HCT116 (cell line): ENCODE measurements at regions of chr5 and their contacts with region 1.

Region 1: DNA sequence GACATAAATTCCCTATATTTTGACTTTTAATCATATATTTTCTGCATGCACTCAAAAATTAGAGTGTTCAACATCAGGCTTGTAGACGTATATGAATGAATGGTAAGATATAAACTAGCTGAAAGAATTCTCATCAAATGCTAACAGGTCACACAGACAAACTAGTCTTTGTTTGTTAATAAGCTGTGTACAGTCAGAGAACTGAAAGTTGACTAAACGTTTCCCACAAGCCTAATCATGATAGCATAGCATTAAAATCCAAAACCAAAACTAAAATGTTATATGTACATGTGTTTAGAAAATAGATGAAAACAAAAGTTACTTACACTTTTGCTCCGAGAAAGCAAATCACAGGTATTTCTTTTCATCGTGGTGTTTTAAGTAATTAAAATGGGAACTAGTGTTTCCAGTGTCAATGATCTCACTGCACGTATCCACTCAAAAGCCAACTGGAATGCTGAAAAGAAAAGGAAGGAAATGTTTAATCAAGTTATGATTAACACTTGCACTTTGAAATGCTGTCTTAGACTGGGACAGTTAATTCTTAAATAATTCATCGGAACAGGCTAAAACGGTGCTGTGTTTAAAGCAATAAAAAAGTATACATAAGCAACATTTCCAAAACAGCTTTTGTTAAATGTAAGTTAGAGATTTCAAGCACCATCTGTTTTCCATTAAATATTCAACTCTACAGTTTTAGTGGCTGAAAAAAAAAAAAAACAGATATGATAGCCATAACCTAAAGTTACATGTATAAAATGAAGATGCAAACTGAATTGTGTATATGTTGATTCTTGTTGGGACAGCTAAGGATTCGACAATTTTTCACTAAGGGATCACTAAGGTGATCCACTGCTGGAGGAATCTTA is 291.9 kb upstream of the PDE4D start:
- DNase-seq: no peak
- ATAC-seq: no peak
- H3K4me3 ChIP-seq: no peak overlapping the region
- H3K27ac ChIP-seq: no peak overlapping the region
- H3K4me1 ChIP-seq: no peaks in the 10 kb centered on the region
- H3K27me3 ChIP-seq: no peaks in the 10 kb centered on the region; the same call in 1 of the 2 replicates
- CTCF ChIP-seq: no peak
- POLR2A ChIP-seq: no peak
- RAD21 ChIP-seq: no peak

Region 2: DNA sequence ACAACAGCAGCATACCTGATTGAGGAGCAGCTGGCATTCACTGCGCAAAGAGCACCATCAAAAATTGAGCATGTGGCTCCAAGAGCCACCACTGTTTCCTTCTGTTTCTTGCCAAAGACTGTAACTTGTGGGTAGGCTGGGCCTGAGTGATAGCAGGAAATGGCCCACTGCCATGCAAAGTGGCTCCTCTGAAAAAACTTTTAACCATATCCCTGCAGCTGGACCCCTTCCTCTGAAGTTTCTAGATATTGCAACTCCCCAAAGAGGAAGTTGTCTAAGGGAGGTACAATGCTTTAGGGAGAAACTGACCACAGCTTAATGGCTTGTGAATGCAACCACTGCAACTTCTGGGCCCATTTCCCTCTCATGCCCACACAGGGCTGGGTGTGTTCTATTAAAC is 63.4 kb after region 1 on chr5:
- CTCF ChIA-PET with region 1: no interaction called
- POLR2A ChIA-PET with region 1: no interaction called
- RAD21 ChIA-PET with region 1: no interaction called
- intact Hi-C with region 1: loop called (anchors 10 kb)
- DNase-seq: no peak
- ATAC-seq: no peak
- H3K4me3 ChIP-seq: no peak overlapping the region
- H3K27ac ChIP-seq: no peak overlapping the region
- H3K4me1 ChIP-seq: no peaks in the 10 kb centered on the region
- H3K27me3 ChIP-seq: peaks cover 8% of the 10 kb centered on the region; the same call in 1 of the 2 replicates
- CTCF ChIP-seq: no peak
- POLR2A ChIP-seq: no peak
- RAD21 ChIP-seq: no peak